ENCODE measurements at regions of chr16 and their contacts with region 1.

Region 1: GRCh38 chr16:19771796-19772195 is 53.7 kb downstream of the IQCK start:
- DNase-seq: no peak
- ATAC-seq: no peak
- H3K4me3 ChIP-seq: no peak overlapping the region
- H3K27ac ChIP-seq: no peak overlapping the region
- H3K4me1 ChIP-seq: 0 out of 2 replicates have a peak, but pooled peaks cover 5% of the 10 kb centered on the region
- H3K27me3 ChIP-seq: no peaks in the 10 kb centered on the region
- CTCF ChIP-seq: no peak
- EP300 ChIP-seq: no peak
- POLR2A ChIP-seq: no peak
- RAD21 ChIP-seq: no peak

Region 2: GRCh38 chr16:19690196-19690595 is 81.6 kb before region 1 on chr16:
- CTCF ChIA-PET with region 1: no interaction called
- POLR2A ChIA-PET with region 1: interaction called, 12 read pairs
- RAD21 ChIA-PET with region 1: no interaction called
- SMC1A ChIA-PET with region 1: no interaction called
- in situ Hi-C with region 1: no loop called
- intact Hi-C with region 1: no loop called
- DNase-seq: no peak
- ATAC-seq: no peak
- H3K4me3 ChIP-seq: no peak overlapping the region
- H3K27ac ChIP-seq: no peak overlapping the region
- H3K4me1 ChIP-seq: no peaks in the 10 kb centered on the region
- H3K27me3 ChIP-seq: no peaks in the 10 kb centered on the region
- CTCF ChIP-seq: no peak
- EP300 ChIP-seq: no peak
- POLR2A ChIP-seq: no peak
- RAD21 ChIP-seq: no peak